ENCODE measurements at regions of chr3 and their contacts with region 1.

Region 1: GRCh38 chr3:187377842-187378241 is 9.7 kb downstream of the RTP4 start:
- DNase-seq: no peak
- H3K4me3 ChIP-seq: no peak overlapping the region
- CTCF ChIP-seq: no peak
- POLR2A ChIP-seq: no peak

Region 2: GRCh38 chr3:188170461-188171459 is 792.9 kb after region 1 on chr3:
- intact Hi-C with region 1: loop called (anchors 5 kb)
- DNase-seq: no peak
- H3K4me3 ChIP-seq: no peak overlapping the region
- CTCF ChIP-seq: no peak
- POLR2A ChIP-seq: no peak

Measured in lower leg skin (tissue), 4 donors.